ENCODE measurements at regions of chr9 and their contacts with region 1.

Region 1: DNA sequence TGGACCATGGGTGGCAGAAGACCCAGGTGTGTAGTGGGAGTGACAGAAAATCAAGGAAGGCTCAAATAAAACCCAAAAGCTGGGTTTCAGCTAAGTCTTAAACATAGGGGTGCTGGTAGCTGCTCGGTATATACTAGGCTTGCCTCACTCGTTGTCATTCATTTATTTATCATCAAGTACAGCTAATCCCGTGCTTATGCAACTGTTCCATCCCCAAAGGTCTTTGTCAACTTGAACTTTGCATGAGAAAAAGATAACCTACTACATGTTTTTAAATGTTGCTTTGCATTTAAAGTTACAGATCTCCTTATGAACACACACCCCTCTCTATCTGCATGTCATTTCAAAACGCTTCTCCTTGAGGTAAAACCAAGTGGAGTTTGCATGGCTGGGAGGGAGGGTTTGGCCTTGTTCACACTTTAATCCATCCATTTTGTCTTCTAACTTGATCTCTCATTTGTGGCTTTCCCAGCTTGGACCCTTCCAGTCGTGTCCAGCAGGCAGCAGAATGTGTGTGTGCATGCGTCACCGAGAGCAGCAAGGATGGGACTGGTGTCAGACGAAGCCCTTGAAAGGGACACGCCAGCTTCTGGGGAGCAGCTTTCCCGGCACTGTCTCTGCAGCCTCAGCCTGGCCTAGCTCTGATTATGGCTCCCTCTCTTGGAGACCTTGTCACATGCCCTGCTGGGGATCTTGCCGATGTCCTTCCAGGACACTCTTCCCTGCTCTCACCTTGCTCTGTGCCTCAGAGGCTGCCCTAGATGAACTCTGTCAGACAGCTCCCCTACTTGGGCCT is 133.5 kb downstream of the GADD45G start:
- DNase-seq: no peak
- H3K4me3 Mint-ChIP-seq: no peak overlapping the region
- H3K27ac Mint-ChIP-seq: peak overlapping the region; percentile 30
- H3K4me1 Mint-ChIP-seq: peaks cover 57% of the 10 kb centered on the region
- H3K27me3 Mint-ChIP-seq: no peaks in the 10 kb centered on the region

Region 2: GRCh38 chr9:89714321-89714720 is 24.0 kb before region 1 on chr9:
- intact Hi-C with region 1: loop called (anchors 2 kb)
- DNase-seq: no peak
- H3K4me3 Mint-ChIP-seq: peak overlapping the region; percentile 50
- H3K27ac Mint-ChIP-seq: peak overlapping the region; percentile 55
- H3K4me1 Mint-ChIP-seq: peaks cover 58% of the 10 kb centered on the region
- H3K27me3 Mint-ChIP-seq: no peaks in the 10 kb centered on the region

Region 3: GRCh38 chr9:89815903-89816573 is 77.7 kb after region 1 on chr9:
- intact Hi-C with region 1: no loop called
- DNase-seq: no peak
- H3K4me3 Mint-ChIP-seq: no peak overlapping the region
- H3K27ac Mint-ChIP-seq: no peak overlapping the region
- H3K4me1 Mint-ChIP-seq: peaks cover 35% of the 10 kb centered on the region
- H3K27me3 Mint-ChIP-seq: peaks cover 12% of the 10 kb centered on the region

Measured in activated CD4-positive, alpha-beta T cell treated with anti-CD3 and anti-CD28 coated beads, Interleukin-2, amount 10 ng/mL, durations not matched to agents 24 days and 14 days (primary cell).